ENCODE measurements at regions of chr5 and their contacts with region 1.

Region 1: DNA sequence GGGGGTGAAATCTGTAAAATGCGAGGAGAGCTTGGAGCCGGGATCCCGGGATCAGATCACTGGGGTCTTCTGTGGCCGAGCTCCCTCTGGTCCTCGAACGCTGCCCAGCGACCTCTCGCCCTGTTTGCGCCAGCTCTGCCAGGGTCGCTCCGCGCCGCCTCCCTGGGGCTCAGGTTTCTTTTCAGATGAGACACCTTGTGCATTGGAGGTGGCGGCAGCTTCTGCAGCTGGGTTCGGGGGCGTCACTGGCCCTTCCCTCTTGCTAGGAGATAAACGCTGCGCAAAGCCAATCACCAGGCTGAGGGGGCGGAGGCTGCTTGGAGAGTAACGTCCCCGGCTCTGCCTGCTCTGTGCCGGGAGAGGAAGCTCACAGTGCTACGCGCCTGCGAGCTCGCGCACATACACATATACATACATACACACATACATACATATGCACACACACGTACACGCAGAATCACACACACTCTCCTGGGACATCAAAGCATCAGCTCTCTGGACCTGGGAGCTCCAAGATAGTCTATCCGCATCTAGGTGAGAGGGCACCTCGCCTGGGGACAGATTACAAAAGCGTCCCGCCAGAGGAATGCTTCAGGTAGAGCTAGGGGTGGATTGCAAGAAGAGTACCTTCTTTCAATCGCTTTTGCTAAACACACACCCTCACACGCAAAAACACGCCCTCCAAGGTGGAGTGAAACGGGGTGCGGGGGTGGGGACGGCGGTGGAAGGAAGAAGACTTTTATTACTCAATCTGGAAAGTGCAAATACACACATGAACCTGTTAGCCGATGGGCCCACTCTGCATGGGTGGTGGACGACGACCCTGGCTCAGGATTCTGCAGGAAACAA is at the start of gene ST8SIA4:
- DNase-seq: peak; percentile 95
- ATAC-seq: peak; percentile 67
- H3K4me3 ChIP-seq: peak within 1 kb of the TSS; percentile 98
- H3K27ac ChIP-seq: peak within 1 kb of the TSS; percentile 98
- H3K4me1 ChIP-seq: no peaks in the 10 kb centered on the region
- H3K27me3 ChIP-seq: no peaks in the 10 kb centered on the region
- CTCF ChIP-seq: no peak
- EP300 ChIP-seq: peak in 1 of 2 experiments; percentile 24; a peak in 1 of 4 replicates
- POLR2A ChIP-seq: peak; percentile 93
- RAD21 ChIP-seq: peak; percentile 18; the same call in 1 of the 2 replicates
- polyA plus RNA-seq, gene ST8SIA4: 4.4 to 7.3 TPM

Region 2: GRCh38 chr5:98928873-98929696 is 1974.2 kb before region 1 on chr5 and contains the start of gene CHD1:
- CTCF ChIA-PET with region 1: no interaction called
- POLR2A ChIA-PET with region 1: no interaction called
- RAD21 ChIA-PET with region 1: no interaction called
- SMC1A ChIA-PET with region 1: no interaction called
- in situ Hi-C with region 1: no loop called
- intact Hi-C with region 1: loop called (anchors 5 kb)
- DNase-seq: peak; percentile 81
- ATAC-seq: peak; percentile 77
- H3K4me3 ChIP-seq: peak within 1 kb of the TSS; percentile 98
- H3K27ac ChIP-seq: peak within 1 kb of the TSS; percentile 99
- H3K4me1 ChIP-seq: peaks cover 19% of the 10 kb centered on the region
- H3K27me3 ChIP-seq: no peaks in the 10 kb centered on the region
- CTCF ChIP-seq: no peak
- EP300 ChIP-seq: peak; percentile 24 to 55; a peak in 3 of 4 replicates
- POLR2A ChIP-seq: peak; percentile 89
- RAD21 ChIP-seq: no peak
- polyA plus RNA-seq, gene CHD1: 25.5 to 32.1 TPM

Region 3: GRCh38 chr5:100444961-100445360 is 458.3 kb before region 1 on chr5:
- CTCF ChIA-PET with region 1: no interaction called
- POLR2A ChIA-PET with region 1: no interaction called
- RAD21 ChIA-PET with region 1: no interaction called
- SMC1A ChIA-PET with region 1: no interaction called
- in situ Hi-C with region 1: no loop called
- intact Hi-C with region 1: no loop called
- DNase-seq: no peak
- ATAC-seq: no peak; the same call in 2 of the 3 replicates
- H3K4me3 ChIP-seq: no peak overlapping the region
- H3K27ac ChIP-seq: no peak overlapping the region
- H3K4me1 ChIP-seq: no peaks in the 10 kb centered on the region
- H3K27me3 ChIP-seq: no peaks in the 10 kb centered on the region
- CTCF ChIP-seq: no peak
- EP300 ChIP-seq: no peak
- POLR2A ChIP-seq: no peak
- RAD21 ChIP-seq: no peak

Region 4: DNA sequence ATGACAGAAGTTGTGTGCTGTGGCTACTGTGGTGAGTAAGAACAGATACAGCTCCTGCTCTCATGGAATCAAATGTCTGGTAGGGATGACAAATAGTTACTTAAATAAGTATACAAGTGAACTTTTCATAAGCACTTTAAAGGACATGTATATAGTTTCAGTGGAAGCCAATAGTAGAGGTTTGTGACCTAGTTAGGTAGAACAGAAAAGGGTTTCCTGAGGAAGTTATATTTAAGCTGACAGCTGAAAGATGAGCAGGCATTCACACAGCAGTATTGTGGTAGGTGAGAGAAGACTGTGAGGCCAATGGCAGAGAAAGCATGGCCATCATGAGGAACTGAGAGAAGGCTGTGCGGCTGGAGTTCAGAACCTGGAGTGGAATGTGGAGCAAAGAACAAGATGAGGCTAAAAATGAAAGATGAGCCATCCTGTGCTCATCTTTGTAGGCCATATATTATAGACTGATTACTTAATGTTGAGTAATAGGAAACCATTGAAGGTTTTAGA is 352.7 kb before region 1 on chr5:
- CTCF ChIA-PET with region 1: no interaction called
- POLR2A ChIA-PET with region 1: no interaction called
- RAD21 ChIA-PET with region 1: interaction called, 4 read pairs
- SMC1A ChIA-PET with region 1: interaction called, 3 read pairs
- in situ Hi-C with region 1: no loop called
- intact Hi-C with region 1: loop called (anchors 5 kb)
- DNase-seq: peak; percentile 72
- ATAC-seq: peak; percentile 96
- H3K4me3 ChIP-seq: no peak overlapping the region
- H3K27ac ChIP-seq: peak overlapping the region; percentile 31; the same call in 1 of the 2 replicates
- H3K4me1 ChIP-seq: peaks cover 8% of the 10 kb centered on the region
- H3K27me3 ChIP-seq: no peaks in the 10 kb centered on the region
- CTCF ChIP-seq: no peak
- EP300 ChIP-seq: no peak
- POLR2A ChIP-seq: no peak
- RAD21 ChIP-seq: no peak

Region 5: GRCh38 chr5:100777680-100778281 is 125.5 kb before region 1 on chr5:
- CTCF ChIA-PET with region 1: interaction called, 232 read pairs
- POLR2A ChIA-PET with region 1: interaction called, 47 read pairs
- RAD21 ChIA-PET with region 1: interaction called, 345 read pairs
- SMC1A ChIA-PET with region 1: interaction called, 389 read pairs
- in situ Hi-C with region 1: loop called (anchors 5 kb)
- intact Hi-C with region 1: loop called (anchors 1 kb)
- DNase-seq: peak; percentile 80
- ATAC-seq: peak; percentile 72
- H3K4me3 ChIP-seq: peak overlapping the region; percentile 20; the same call in 1 of the 2 replicates
- H3K27ac ChIP-seq: peak overlapping the region; percentile 55
- H3K4me1 ChIP-seq: peaks cover 27% of the 10 kb centered on the region
- H3K27me3 ChIP-seq: no peaks in the 10 kb centered on the region
- CTCF ChIP-seq: no peak
- EP300 ChIP-seq: peak; percentile 73 to 94
- POLR2A ChIP-seq: no peak
- RAD21 ChIP-seq: no peak

Region 6: DNA sequence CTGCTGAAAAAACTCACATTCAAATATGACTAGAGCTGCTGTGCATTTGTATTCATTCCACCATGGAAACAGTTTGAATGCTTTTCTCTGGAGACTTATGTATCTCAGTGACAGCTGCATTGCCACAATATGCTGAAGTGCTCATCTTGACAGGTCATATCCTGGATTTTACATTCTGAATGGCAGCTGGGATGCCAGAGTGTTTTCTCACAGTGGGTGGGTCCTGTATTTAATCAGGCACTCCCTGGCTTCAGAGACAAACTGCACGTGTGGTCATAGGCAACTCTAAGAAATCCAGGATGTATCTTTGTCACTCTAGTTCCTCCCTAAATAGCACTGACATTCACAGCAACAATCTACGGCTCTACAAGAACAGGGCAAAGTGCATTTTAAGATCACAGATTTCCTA is 75.8 kb before region 1 on chr5:
- CTCF ChIA-PET with region 1: interaction called, 23 read pairs
- POLR2A ChIA-PET with region 1: interaction called, 25 read pairs
- RAD21 ChIA-PET with region 1: interaction called, 86 read pairs
- SMC1A ChIA-PET with region 1: interaction called, 28 read pairs
- in situ Hi-C with region 1: no loop called
- intact Hi-C with region 1: loop called (anchors 1 kb)
- DNase-seq: no peak
- ATAC-seq: peak; percentile 29
- H3K4me3 ChIP-seq: peak overlapping the region; percentile 44; the same call in 1 of the 2 replicates
- H3K27ac ChIP-seq: peak overlapping the region; percentile 95
- H3K4me1 ChIP-seq: peaks cover 32% of the 10 kb centered on the region
- H3K27me3 ChIP-seq: no peaks in the 10 kb centered on the region
- CTCF ChIP-seq: no peak
- EP300 ChIP-seq: no peak
- POLR2A ChIP-seq: no peak
- RAD21 ChIP-seq: no peak

Region 7: DNA sequence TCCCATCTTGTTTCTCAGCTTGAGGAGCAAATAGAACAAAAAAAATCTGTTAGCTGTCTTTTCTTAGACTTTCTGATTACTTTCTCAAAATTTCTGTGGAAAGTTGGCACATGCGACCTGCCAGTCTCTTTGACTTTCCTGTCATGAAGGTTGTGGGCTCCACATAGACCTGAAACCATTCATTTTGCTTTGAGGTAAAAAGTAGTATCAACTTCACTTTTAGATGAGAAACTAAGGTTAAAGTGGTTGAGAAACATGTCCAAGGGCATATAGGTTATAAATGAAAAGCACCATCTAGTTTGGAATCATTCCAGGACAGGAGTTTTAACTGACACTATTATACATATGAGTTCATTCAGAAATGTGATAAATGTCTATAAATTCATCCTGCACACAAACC is 42.9 kb before region 1 on chr5:
- CTCF ChIA-PET with region 1: interaction called, 18 read pairs
- POLR2A ChIA-PET with region 1: interaction called, 61 read pairs
- RAD21 ChIA-PET with region 1: interaction called, 122 read pairs
- SMC1A ChIA-PET with region 1: interaction called, 220 read pairs
- in situ Hi-C with region 1: no loop called
- intact Hi-C with region 1: loop called (anchors 2 kb)
- DNase-seq: no peak
- ATAC-seq: peak; percentile 63
- H3K4me3 ChIP-seq: no peak overlapping the region
- H3K27ac ChIP-seq: peak overlapping the region; percentile 20
- H3K4me1 ChIP-seq: peaks cover 28% of the 10 kb centered on the region
- H3K27me3 ChIP-seq: no peaks in the 10 kb centered on the region
- CTCF ChIP-seq: no peak
- EP300 ChIP-seq: 0 out of 4 replicates have a peak, but pooled peaks of 1 of the 2 experiments have one; percentile 23
- POLR2A ChIP-seq: no peak
- RAD21 ChIP-seq: no peak

Region 8: GRCh38 chr5:101062902-101063301 is 159.6 kb after region 1 on chr5:
- CTCF ChIA-PET with region 1: no interaction called
- POLR2A ChIA-PET with region 1: no interaction called
- RAD21 ChIA-PET with region 1: no interaction called
- SMC1A ChIA-PET with region 1: no interaction called
- in situ Hi-C with region 1: no loop called
- intact Hi-C with region 1: no loop called
- DNase-seq: no peak
- ATAC-seq: no peak
- H3K4me3 ChIP-seq: no peak overlapping the region
- H3K27ac ChIP-seq: no peak overlapping the region
- H3K4me1 ChIP-seq: no peaks in the 10 kb centered on the region
- H3K27me3 ChIP-seq: no peaks in the 10 kb centered on the region
- CTCF ChIP-seq: no peak
- EP300 ChIP-seq: no peak
- POLR2A ChIP-seq: no peak
- RAD21 ChIP-seq: no peak

Region 9: DNA sequence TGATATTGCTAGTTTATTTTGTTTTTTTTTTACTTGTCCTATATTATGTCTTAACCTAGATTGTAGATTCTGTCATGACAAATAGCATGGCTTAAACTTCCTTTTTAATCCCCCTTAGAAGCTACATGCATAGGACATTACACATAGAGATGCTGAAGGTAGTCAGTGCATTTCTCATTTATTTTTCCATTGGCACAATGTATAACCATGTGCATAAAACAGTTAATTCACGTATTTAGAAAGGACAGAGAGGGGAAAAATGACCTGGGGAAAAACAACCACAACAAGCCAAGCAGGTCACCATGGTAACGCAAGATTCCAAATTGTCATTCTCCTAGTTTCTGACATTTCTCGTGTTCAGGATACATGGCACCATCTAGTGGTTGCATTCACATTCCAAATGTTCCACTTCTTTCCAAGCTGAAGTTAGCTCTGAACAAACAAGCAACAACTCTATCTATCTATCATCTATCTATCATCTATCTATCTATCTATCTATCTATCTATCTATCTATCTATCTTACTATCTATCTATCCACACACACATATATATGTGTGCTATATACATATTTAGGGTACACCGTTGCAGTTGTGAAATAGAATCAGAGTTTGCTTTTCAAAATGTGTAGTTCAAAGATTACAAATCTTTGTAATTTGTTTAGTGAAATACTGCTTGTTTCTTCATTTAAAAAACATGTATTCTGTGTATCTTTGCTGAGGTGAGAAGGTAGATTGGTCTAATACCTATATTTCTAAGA is 487.1 kb after region 1 on chr5:
- CTCF ChIA-PET with region 1: interaction called, 5 read pairs
- POLR2A ChIA-PET with region 1: interaction called, 3 read pairs
- RAD21 ChIA-PET with region 1: interaction called, 4 read pairs
- SMC1A ChIA-PET with region 1: interaction called, 6 read pairs
- in situ Hi-C with region 1: no loop called
- intact Hi-C with region 1: loop called (anchors 2 kb)
- DNase-seq: peak; percentile 12
- ATAC-seq: peak; percentile 57
- H3K4me3 ChIP-seq: no peak overlapping the region
- H3K27ac ChIP-seq: no peak overlapping the region
- H3K4me1 ChIP-seq: no peaks in the 10 kb centered on the region
- H3K27me3 ChIP-seq: no peaks in the 10 kb centered on the region
- CTCF ChIP-seq: peak; percentile 42 to 67 (median 58); a peak in 5 of 6 replicates
- EP300 ChIP-seq: no peak
- POLR2A ChIP-seq: no peak
- RAD21 ChIP-seq: peak; percentile 68